ENCODE measurements at regions of chr3 and their contacts with region 1.

Region 1: DNA sequence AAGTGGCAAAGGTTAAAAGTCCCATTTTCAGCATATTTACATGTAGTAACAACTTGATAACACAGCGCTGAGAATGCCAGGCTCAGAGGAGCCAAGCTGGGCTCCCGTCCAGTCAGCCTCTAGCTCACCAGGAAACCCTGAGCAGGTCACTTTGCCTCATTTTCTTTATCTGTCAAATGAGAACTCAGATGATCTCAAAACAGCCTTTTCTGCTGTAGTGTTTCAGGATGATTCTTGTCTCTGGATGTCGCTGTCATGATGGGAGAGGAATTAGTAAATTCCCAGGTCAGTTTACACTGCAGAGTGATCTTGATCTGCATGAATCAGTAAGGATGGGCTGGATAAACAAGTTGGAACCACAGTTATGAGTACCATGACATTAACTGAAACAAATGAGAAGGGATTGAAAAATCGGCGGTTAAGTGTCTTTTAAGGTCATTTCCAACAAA is 82.8 kb downstream of the PPARG start:
- DNase-seq: no peak
- H3K4me3 ChIP-seq: no peak overlapping the region
- H3K27ac ChIP-seq: no peak overlapping the region
- H3K4me1 ChIP-seq: no peaks in the 10 kb centered on the region
- H3K27me3 ChIP-seq: peaks cover 0 to 4% of the 10 kb centered on the region in 2 experiments
- CTCF ChIP-seq: no peak
- POLR2A ChIP-seq: no peak

Region 2: DNA sequence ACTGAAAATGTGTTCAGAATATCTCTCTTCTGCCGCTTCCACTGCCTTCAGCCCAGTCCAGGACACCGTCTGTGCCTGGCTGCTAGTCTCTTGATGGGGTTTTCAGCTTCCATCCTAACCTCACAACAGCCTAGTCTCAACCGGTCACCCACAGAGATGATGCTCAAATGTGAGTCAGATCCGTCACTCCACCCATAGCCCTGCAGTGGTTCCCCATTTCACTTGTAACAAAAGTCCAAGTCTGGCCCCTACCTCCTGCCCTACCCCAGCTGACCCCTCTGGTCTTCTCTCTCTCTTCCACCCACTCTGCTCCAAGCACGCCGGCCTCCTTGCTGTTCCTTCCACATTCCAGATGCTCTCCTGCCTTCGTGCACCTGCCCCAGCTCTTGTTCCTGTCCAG is 14.7 kb before region 1 on chr3:
- CTCF ChIA-PET with region 1: interaction called, 3 read pairs
- POLR2A ChIA-PET with region 1: no interaction called
- dilution Hi-C with region 1: no loop called
- intact Hi-C with region 1: loop called (anchors 2 kb)
- DNase-seq: no peak
- H3K4me3 ChIP-seq: no peak overlapping the region
- H3K27ac ChIP-seq: no peak overlapping the region
- H3K4me1 ChIP-seq: no peaks in the 10 kb centered on the region
- H3K27me3 ChIP-seq: peaks cover 0 to 2% of the 10 kb centered on the region in 2 experiments
- CTCF ChIP-seq: no peak
- POLR2A ChIP-seq: no peak

Measured in endothelial cell of umbilical vein (primary cell).